Activated CD4-positive, alpha-beta memory T cell treated with anti-CD3 and anti-CD28 coated beads for 36 hours (primary cell): ENCODE measurements at regions of chr2 and their contacts with region 1.

Region 1: GRCh38 chr2:99489761-99490622 is at the start of gene REV1:
- DNase-seq: peak; percentile 95
- H3K4me3 Mint-ChIP-seq: peak within 1 kb of the TSS; percentile 97
- H3K27ac Mint-ChIP-seq: peak within 1 kb of the TSS; percentile 91
- H3K4me1 Mint-ChIP-seq: peaks cover 32% of the 10 kb centered on the region
- H3K27me3 Mint-ChIP-seq: no peaks in the 10 kb centered on the region
- total RNA-seq, gene REV1: 22.6 to 30.6 TPM

Region 2: DNA sequence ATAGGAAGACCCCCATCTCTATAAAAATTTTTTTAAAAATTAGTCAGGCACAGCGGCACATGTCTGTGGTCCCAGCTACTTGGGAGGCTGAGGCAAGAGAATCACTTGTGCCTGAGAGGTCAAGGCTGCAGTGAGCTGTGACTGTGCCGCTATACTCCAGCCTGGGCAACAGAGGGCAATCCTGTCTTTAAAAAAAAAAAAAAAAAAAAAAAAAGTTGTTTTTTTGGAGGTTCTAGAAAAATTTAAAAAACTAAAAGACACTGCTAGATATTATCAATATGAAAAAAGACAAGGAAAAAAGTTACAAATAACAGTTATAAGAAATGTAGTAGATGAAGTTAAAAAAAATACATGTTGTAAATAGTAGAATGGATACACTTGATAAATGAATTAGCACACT is 404.6 kb before region 1 on chr2:
- CTCF ChIA-PET with region 1: no interaction called
- POLR2A ChIA-PET with region 1: no interaction called
- intact Hi-C with region 1: loop called (anchors 1 kb)
- DNase-seq: peak; percentile 12
- H3K4me3 Mint-ChIP-seq: no peak overlapping the region
- H3K27ac Mint-ChIP-seq: no peak overlapping the region
- H3K4me1 Mint-ChIP-seq: peaks cover 3% of the 10 kb centered on the region
- H3K27me3 Mint-ChIP-seq: peaks cover 6% of the 10 kb centered on the region

Region 3: DNA sequence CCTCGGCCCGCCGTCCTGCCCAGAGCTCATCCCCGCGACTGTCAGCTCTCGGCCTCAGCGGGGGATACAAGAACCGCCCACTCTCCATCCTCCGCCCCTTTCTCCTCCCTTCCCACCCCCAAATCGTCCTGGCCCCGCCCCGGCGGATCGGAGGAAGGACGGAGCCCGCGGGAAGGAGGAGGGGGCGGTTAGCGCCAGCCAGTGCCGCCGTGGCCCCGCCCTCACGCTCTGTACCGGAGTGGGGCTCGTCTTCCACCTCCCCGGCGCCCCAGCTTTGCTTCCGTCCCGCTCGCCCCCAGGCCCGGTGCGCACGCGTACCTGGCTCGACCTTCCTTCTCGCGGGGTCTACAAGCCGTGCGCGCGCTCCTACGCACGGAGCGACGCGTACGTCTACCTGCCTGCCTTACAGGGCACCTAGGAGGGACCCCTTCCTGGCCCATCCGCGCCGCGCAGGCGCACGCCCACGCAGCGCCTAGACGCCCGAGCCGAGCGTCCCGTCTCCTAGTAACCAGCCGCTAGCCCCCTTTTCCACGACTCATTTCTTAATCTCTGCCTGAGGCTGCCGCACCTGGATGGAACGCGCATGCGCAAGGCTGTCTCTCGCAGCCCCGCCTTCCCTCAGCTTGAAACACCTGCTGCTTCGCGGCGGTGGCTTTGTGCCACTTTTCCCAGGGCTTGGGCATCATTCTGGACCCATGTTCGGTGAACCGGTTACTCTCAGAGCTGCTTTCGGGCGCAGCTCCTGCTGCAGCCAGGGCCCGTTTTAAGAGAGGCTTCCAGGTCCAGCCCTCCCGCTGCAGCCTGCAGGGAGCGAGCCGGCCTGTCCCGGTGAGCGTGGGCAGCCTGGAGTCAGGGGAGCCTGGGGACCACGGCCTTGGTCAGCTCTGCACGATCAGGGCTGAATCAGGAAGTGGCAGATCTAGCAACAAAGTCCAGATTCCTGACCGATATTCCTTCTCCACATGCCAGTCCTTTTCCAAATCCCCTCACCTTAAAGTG is 348.6 kb before region 1 on chr2 and contains the start of gene C2orf15:
- CTCF ChIA-PET with region 1: no interaction called
- POLR2A ChIA-PET with region 1: no interaction called
- intact Hi-C with region 1: loop called (anchors 1 kb)
- DNase-seq: peak; percentile 98
- H3K4me3 Mint-ChIP-seq: peak within 1 kb of the TSS; percentile 93
- H3K27ac Mint-ChIP-seq: peak within 1 kb of the TSS; percentile 88
- H3K4me1 Mint-ChIP-seq: peaks cover 19% of the 10 kb centered on the region
- H3K27me3 Mint-ChIP-seq: no peaks in the 10 kb centered on the region
- total RNA-seq, gene C2orf15: 0.48 to 0.50 TPM

Region 4: GRCh38 chr2:99154643-99155536 is 335.1 kb before region 1 on chr2 and contains the starts of genes LIPT1 and TSGA10:
- CTCF ChIA-PET with region 1: interaction called, 3 read pairs
- POLR2A ChIA-PET with region 1: no interaction called
- intact Hi-C with region 1: loop called (anchors 1 kb)
- DNase-seq: peak; percentile 96
- H3K4me3 Mint-ChIP-seq: no peak within 1 kb of the TSS
- H3K27ac Mint-ChIP-seq: peak within 1 kb of the TSS; percentile 91
- H3K4me1 Mint-ChIP-seq: peaks cover 24% of the 10 kb centered on the region
- H3K27me3 Mint-ChIP-seq: no peaks in the 10 kb centered on the region
- total RNA-seq, gene LIPT1: 3.3 to 4.6 TPM
- total RNA-seq, gene TSGA10: 6.3 to 7.0 TPM

Region 5: DNA sequence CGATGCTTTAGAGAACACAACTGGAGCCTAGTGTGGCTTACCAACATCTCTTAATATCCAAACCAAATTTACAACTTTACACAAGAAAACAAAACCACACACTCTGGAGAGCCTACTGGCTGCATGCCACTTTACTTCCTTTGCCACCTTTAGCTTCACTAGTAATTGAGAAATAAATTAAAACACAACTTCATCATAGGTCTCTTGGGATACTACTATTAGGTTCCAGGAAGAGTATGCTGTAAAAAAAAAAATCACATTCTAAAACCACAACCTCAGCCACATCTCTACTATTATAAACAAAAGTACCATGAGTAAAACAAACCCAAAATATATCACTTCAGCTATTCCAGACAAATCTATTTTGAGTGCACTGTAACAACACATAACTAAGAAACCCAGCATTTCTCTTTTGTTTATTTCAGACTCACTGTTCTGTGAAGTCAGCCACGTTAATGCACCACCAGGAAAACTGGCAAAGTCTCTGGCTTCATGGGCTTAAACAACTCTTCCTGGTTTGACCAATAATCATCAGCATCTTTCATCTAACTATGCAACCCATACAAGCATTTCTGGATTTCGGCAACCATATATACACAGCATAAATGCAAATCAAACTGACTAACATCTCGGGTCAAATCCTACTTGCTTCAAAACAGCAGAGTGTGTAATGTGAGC is 59.2 kb before region 1 on chr2:
- CTCF ChIA-PET with region 1: interaction called, 4 read pairs
- POLR2A ChIA-PET with region 1: no interaction called
- intact Hi-C with region 1: loop called (anchors 10 kb)
- DNase-seq: no peak
- H3K4me3 Mint-ChIP-seq: no peak overlapping the region
- H3K27ac Mint-ChIP-seq: no peak overlapping the region
- H3K4me1 Mint-ChIP-seq: peaks cover 15% of the 10 kb centered on the region
- H3K27me3 Mint-ChIP-seq: no peaks in the 10 kb centered on the region